Activated T-helper 1 cell treated with anti-CD3 and anti-CD28 coated beads, Interleukin-12 subunit alpha, Interleukin-12 subunit beta, Interleukin-2, Interleukin-4 antibody, amounts not matched to agents 30 ng/mL and 10 ng/mL and 1 ng/mL, durations not matched to agents 14 hours and 24 hours and 36 hours (primary cell): ENCODE measurements at regions of chr5 and their contacts with region 1.

Region 1: DNA sequence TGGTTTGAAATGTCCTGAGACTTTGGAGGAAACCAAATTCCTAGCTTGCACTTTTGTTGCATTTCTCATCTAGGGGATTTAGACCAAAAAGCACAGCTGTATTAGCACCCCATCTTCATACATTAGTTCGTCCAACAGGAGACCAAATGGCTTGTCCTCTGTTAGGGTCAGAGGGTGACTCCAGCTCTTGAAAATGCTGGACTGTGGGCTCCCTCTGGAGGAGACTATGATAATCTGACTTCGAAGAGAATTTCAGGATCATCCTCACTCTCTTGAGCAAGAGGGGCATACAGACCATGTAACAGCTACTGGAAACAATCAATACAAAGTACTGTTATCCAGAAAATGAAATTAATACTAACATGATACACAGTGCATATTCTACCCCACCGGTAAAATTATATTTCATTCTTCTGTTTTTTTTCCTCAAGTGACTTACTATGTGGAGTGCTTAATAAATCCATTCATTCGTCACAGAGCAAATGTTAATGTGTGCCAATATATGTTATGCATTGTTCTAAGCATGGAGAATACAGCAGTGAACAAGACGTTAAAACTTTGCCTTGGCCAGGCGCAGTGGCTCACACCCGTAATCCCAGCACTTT is 63.7 kb upstream of the PPP2CA start:
- DNase-seq: peak; percentile 3
- H3K4me3 Mint-ChIP-seq: no peak overlapping the region
- H3K27ac Mint-ChIP-seq: no peak overlapping the region
- H3K4me1 Mint-ChIP-seq: no peaks in the 10 kb centered on the region
- H3K27me3 Mint-ChIP-seq: peaks cover 8% of the 10 kb centered on the region

Region 2: DNA sequence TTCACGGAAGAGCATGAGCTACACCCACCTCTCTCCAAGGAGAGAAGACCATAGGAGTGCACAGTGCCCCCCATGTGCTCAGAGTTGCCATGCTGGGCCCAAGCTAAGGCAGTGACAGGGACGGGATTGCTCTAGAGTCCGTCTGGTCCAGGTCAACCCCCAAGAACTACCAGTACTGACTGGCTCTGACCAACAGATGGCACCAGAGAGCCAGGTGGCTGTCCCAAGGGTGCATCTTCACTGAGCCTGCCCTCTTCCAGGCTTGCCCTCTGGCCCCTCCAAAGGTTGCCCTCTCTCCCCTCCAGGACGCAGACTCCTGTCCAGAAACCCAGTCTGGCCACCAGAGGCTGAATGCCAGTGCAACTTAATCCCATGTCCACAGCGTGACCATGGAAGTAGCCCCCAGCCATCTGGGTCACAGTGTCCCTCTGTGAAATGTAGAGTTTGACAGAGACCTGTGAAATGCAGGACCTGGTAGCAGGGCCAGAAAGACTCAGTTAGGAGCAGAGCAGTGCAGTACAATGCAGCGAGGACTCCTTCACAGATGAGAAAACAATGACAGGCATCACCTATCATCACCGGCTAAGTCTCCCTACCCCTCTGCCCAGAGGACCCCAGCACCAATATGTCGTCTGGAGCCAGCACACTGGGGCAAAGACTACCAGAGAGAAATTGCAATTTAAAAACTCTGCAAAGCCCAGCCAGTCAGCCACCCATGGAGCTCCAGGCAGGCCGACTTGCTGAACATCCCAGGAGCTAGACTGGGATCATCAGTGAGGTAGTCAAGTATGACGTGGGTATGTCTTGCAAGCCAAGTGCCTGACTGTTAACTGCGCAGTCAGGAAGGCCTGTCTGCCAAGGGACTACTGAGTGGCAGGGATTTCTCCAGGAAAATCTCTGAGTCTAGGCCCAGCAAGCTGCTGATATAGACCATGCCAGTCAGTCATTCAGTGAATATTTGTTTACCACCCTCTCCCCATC is 105.2 kb before region 1 on chr5:
- intact Hi-C with region 1: loop called (anchors 1 kb)
- DNase-seq: peak; percentile 67
- H3K4me3 Mint-ChIP-seq: no peak overlapping the region
- H3K27ac Mint-ChIP-seq: no peak overlapping the region
- H3K4me1 Mint-ChIP-seq: no peaks in the 10 kb centered on the region
- H3K27me3 Mint-ChIP-seq: peaks cover 8% of the 10 kb centered on the region

Region 3: GRCh38 chr5:134275822-134276221 is 13.8 kb before region 1 on chr5:
- intact Hi-C with region 1: no loop called
- DNase-seq: no peak
- H3K4me3 Mint-ChIP-seq: no peak overlapping the region
- H3K27ac Mint-ChIP-seq: no peak overlapping the region
- H3K4me1 Mint-ChIP-seq: no peaks in the 10 kb centered on the region
- H3K27me3 Mint-ChIP-seq: peaks cover 7% of the 10 kb centered on the region